Mammary epithelial cell (primary cell): ENCODE measurements at regions of chr20 and their contacts with region 1.

Region 1: GRCh38 chr20:47620808-47621805 is 119.4 kb downstream of the NCOA3 start:
- DNase-seq: peak; percentile 36
- H3K4me3 ChIP-seq: no peak overlapping the region
- H3K27ac ChIP-seq: no peak overlapping the region
- H3K4me1 ChIP-seq: no peaks in the 10 kb centered on the region
- H3K27me3 ChIP-seq: no peaks in the 10 kb centered on the region
- CTCF ChIP-seq: peak; percentile 78 to 85

Region 2: GRCh38 chr20:46757754-46758678 is 863.1 kb before region 1 on chr20:
- CTCF ChIA-PET with region 1: interaction called, 3 read pairs
- dilution Hi-C with region 1: no loop called
- in situ Hi-C with region 1: loop called (anchors 25 kb)
- intact Hi-C with region 1: no loop called
- DNase-seq: peak; percentile 38
- H3K4me3 ChIP-seq: no peak overlapping the region
- H3K27ac ChIP-seq: no peak overlapping the region
- H3K4me1 ChIP-seq: no peaks in the 10 kb centered on the region
- H3K27me3 ChIP-seq: no peaks in the 10 kb centered on the region
- CTCF ChIP-seq: peak; percentile 92 to 97

Region 3: GRCh38 chr20:47265811-47266383 is 355.2 kb before region 1 on chr20:
- CTCF ChIA-PET with region 1: no interaction called
- dilution Hi-C with region 1: no loop called
- in situ Hi-C with region 1: loop called in 1 of 2 experiments (anchors 25 kb)
- intact Hi-C with region 1: loop called (anchors 2 kb)
- DNase-seq: no peak
- H3K4me3 ChIP-seq: no peak overlapping the region
- H3K27ac ChIP-seq: no peak overlapping the region
- H3K4me1 ChIP-seq: no peaks in the 10 kb centered on the region
- H3K27me3 ChIP-seq: no peaks in the 10 kb centered on the region
- CTCF ChIP-seq: no peak

Region 4: DNA sequence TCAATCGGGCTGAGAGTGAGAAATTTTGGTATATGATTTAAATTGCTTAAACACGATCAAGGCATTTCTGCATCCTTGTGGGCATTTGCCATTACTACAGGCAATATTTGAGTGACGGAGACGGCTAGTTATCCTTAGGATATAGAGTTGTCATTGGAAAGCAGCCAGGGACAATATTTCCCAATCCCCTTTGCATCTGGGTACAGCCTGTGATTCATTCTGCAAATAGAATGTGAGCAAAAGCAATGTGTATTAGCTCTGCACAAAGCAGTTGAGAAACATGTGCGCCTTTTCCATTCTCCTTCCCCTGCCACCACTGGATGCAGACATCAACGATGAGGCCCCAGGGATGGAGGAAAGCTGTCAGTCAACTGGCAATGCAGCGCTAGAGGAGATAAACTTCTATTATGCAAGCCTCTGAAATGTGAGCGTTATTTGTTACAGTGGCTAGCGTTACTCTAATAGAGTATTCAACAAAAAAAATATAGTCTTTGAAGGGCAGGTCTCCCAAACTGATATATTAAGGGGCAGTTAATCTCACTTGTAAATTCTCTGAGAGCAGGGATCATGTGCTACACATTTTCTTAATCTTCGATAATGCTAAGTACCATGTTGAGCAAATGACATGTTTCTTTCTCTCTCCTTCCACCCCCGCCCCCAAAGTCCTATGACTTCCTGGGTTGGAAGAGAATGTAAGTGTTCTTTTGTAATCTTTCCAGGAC is 156.6 kb before region 1 on chr20:
- CTCF ChIA-PET with region 1: no interaction called
- dilution Hi-C with region 1: no loop called
- in situ Hi-C with region 1: no loop called
- intact Hi-C with region 1: loop called (anchors 2 kb)
- DNase-seq: peak; percentile 96
- H3K4me3 ChIP-seq: no peak overlapping the region
- H3K27ac ChIP-seq: peak overlapping the region; percentile 38
- H3K4me1 ChIP-seq: peaks cover 20% of the 10 kb centered on the region
- H3K27me3 ChIP-seq: no peaks in the 10 kb centered on the region
- CTCF ChIP-seq: peak; percentile 56 to 59

Region 5: DNA sequence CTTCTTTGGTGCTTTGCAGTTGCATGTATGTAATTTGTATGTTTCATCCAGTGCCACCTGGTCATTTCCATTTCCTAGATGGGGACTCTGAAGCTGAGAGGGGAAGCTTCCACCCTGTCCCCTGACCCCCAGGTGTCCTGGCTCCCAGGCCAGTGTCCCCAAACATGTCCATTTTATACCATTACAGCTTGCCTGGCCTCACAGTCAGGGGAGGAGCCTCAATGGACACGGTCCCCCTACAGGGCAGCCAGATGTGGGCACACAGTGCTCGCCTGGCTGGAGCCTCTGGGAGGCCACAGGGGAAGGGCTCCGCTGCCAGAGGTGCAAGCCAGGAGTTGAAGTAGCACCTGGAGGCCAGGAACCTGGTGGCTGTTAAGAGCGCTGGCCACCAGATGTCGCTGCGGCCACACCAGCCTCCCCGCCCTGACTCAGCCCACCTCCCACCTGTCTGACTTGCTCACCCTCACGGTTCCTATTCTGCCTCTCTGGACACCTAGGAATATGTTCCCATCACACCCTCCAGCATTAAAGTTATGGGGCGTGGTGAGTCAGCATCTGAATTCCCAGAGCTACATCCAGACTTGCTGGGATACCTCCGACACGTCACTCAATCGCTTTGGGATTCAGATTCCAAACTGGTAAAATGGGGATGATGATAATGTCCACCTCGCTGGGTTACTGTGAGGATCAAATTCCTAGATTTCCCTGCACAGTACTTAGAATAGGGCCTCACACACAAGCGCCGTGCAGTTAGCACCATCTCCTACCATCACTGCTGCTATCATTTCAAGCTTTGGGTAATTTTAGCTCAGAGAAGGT is 56.7 kb after region 1 on chr20:
- CTCF ChIA-PET with region 1: no interaction called
- dilution Hi-C with region 1: no loop called
- in situ Hi-C with region 1: no loop called
- intact Hi-C with region 1: no loop called
- DNase-seq: peak; percentile 55
- H3K4me3 ChIP-seq: no peak overlapping the region
- H3K27ac ChIP-seq: no peak overlapping the region
- H3K4me1 ChIP-seq: no peaks in the 10 kb centered on the region
- H3K27me3 ChIP-seq: no peaks in the 10 kb centered on the region
- CTCF ChIP-seq: peak; percentile 68 to 79